BJ (cell line): ENCODE measurements at regions of chr19 and their contacts with region 1.

Region 1: DNA sequence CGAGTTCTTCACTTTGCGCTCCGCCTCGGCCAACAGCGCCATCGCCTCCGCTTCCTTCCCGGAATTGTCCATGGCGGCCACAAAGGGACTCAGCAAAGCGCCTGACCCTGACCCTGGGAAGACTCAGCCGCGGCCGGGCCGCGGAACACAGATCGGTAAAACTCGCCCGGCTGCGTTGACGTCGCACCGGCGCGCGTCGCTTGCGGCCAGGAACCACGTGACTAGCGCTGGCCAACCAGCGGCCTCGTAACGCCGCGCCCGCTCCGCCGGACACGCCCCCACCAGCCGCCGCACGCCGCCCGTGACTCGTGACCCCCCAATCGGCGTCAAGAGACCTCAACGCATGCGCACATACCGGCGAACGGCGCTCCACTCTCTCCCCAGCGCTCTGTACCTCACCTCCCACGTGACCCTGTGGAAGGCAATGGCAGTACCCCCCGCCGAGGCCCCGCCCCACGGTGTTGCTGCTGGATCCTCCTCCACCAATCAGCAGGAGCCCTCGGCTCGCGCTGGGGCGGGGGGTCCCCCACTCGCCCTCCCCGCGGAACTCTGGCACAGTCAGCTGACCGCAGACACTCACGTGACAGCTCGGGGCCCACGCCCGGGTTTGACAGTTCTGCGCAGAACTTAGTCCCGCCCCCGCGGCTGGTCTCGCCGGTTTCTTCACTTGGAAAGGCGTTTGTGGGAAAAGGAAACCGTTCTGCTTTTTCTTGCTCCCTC is at the start of gene NAPA:
- DNase-seq: peak; percentile 99
- H3K4me3 ChIP-seq: peak within 1 kb of the TSS; percentile 78
- H3K27me3 ChIP-seq: 0 out of 2 replicates have a peak, but pooled peaks cover 1% of the 10 kb centered on the region
- CTCF ChIP-seq: no peak
- polyA plus RNA-seq, gene NAPA: 100 and 203 TPM in 2 replicates

Region 2: DNA sequence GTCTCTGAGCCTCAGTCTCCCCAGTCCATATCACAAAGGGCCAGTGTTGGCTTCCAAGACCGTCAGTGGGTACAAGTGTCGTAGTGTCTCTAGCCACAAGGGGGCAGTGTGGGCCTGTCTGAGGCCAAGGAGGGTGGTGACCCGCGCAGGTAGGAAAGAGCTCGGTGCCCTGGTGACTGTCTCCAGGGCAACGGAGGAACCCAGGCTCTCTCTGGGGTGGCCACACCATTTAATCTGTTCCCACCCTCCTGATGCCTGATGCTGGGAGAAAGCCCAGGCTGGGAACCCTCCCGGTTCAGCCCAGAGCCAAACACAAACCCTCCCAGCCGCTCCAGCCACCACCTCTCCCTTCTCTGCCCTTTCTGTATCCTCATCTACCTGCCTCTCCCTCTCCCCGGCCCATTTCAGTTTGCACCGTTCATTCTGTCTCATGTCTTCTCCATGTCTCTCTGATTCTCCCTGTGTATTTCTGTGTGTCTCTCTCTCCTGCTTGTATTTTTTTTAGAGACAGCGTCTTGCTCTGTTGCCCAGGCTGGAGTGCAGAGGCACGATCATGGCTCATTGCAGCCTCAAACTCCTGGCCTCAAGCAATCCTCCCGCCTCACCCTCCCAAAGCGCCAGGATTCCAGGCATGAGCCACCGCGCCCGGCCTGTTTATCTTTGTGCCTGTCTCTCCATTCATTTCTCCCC is 78.2 kb before region 1 on chr19:
- CTCF ChIA-PET with region 1: interaction called, 18 read pairs
- POLR2A ChIA-PET with region 1: no interaction called
- DNase-seq: no peak
- H3K4me3 ChIP-seq: no peak overlapping the region
- H3K27me3 ChIP-seq: peaks cover 2% of the 10 kb centered on the region; the same call in 1 of the 2 replicates
- CTCF ChIP-seq: peak; percentile 90

Region 3: GRCh38 chr19:47600246-47601179 is 85.5 kb after region 1 on chr19:
- CTCF ChIA-PET with region 1: interaction called, 12 read pairs
- POLR2A ChIA-PET with region 1: no interaction called
- DNase-seq: peak; percentile 94
- H3K4me3 ChIP-seq: peak overlapping the region; percentile 44
- H3K27me3 ChIP-seq: no peaks in the 10 kb centered on the region
- CTCF ChIP-seq: no peak